ENCODE measurements at regions of chr4 and their contacts with region 1.

Region 1: GRCh38 chr4:183504064-183504929 is 561 bp upstream of the ING2 start:
- DNase-seq: peak; percentile 99
- H3K4me3 Mint-ChIP-seq: peak overlapping the region; percentile 93
- H3K27ac Mint-ChIP-seq: peak overlapping the region; percentile 92
- H3K4me1 Mint-ChIP-seq: peaks cover 28% of the 10 kb centered on the region
- H3K27me3 Mint-ChIP-seq: no peaks in the 10 kb centered on the region

Region 2: GRCh38 chr4:182917182-182918043 is 586.9 kb before region 1 on chr4 and contains the start of gene DCTD:
- CTCF ChIA-PET with region 1: no interaction called
- POLR2A ChIA-PET with region 1: no interaction called
- intact Hi-C with region 1: loop called (anchors 1 kb)
- DNase-seq: peak; percentile 85
- H3K4me3 Mint-ChIP-seq: peak within 1 kb of the TSS; percentile 83
- H3K27ac Mint-ChIP-seq: peak within 1 kb of the TSS; percentile 93
- H3K4me1 Mint-ChIP-seq: peaks cover 51% of the 10 kb centered on the region
- H3K27me3 Mint-ChIP-seq: no peaks in the 10 kb centered on the region
- total RNA-seq, gene DCTD: 115 to 117 TPM

Region 3: GRCh38 chr4:183374950-183375555 is 129.2 kb before region 1 on chr4:
- CTCF ChIA-PET with region 1: no interaction called
- POLR2A ChIA-PET with region 1: no interaction called
- intact Hi-C with region 1: no loop called
- DNase-seq: no peak
- H3K4me3 Mint-ChIP-seq: no peak overlapping the region
- H3K27ac Mint-ChIP-seq: no peak overlapping the region
- H3K4me1 Mint-ChIP-seq: no peaks in the 10 kb centered on the region
- H3K27me3 Mint-ChIP-seq: peaks cover 1% of the 10 kb centered on the region

Region 4: GRCh38 chr4:183471946-183472708 is 32.2 kb before region 1 on chr4:
- CTCF ChIA-PET with region 1: interaction called, 5 read pairs
- POLR2A ChIA-PET with region 1: no interaction called
- intact Hi-C with region 1: loop called (anchors 2 kb)
- DNase-seq: peak; percentile 84
- H3K4me3 Mint-ChIP-seq: no peak overlapping the region
- H3K27ac Mint-ChIP-seq: no peak overlapping the region
- H3K4me1 Mint-ChIP-seq: peaks cover 2% of the 10 kb centered on the region
- H3K27me3 Mint-ChIP-seq: no peaks in the 10 kb centered on the region

Region 5: GRCh38 chr4:183659029-183659871 is 155.0 kb after region 1 on chr4 and contains the starts of genes RWDD4 and TRAPPC11:
- CTCF ChIA-PET with region 1: no interaction called
- POLR2A ChIA-PET with region 1: interaction called, 3 read pairs
- intact Hi-C with region 1: loop called (anchors 1 kb)
- DNase-seq: peak; percentile 98
- H3K4me3 Mint-ChIP-seq: peak within 1 kb of the TSS; percentile 85
- H3K27ac Mint-ChIP-seq: peak within 1 kb of the TSS; percentile 80
- H3K4me1 Mint-ChIP-seq: peaks cover 35% of the 10 kb centered on the region
- H3K27me3 Mint-ChIP-seq: no peaks in the 10 kb centered on the region
- total RNA-seq, gene RWDD4: 19.4 to 19.8 TPM
- total RNA-seq, gene TRAPPC11: 29.7 to 30.2 TPM

Region 6: DNA sequence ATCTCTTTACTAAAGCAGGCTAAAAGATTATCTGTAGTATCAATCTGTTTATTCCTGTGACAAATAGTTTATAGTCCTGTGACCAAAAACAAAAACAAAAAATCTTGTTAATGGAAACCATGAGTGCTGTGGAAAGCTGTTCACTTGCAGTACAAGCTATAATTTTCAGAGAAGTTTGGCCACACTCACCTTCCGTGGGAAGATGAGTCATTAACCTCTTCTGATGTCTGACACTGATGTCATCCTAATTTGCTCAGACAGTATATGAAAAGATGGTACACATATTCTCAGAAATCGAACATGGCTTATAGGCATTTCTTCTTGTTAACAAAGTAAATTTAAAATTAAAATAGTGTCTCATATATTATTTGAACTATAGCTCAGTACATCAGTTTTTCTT is 733.3 kb after region 1 on chr4:
- CTCF ChIA-PET with region 1: no interaction called
- POLR2A ChIA-PET with region 1: no interaction called
- intact Hi-C with region 1: loop called (anchors 1 kb)
- DNase-seq: peak; percentile 72
- H3K4me3 Mint-ChIP-seq: peak overlapping the region; percentile 33
- H3K27ac Mint-ChIP-seq: peak overlapping the region; percentile 86
- H3K4me1 Mint-ChIP-seq: peaks cover 34% of the 10 kb centered on the region
- H3K27me3 Mint-ChIP-seq: no peaks in the 10 kb centered on the region

Region 7: GRCh38 chr4:184825896-184826690 is 1321.8 kb after region 1 on chr4 and contains the start of gene ACSL1:
- CTCF ChIA-PET with region 1: no interaction called
- POLR2A ChIA-PET with region 1: no interaction called
- intact Hi-C with region 1: loop called (anchors 10 kb)
- DNase-seq: peak; percentile 84
- H3K4me3 Mint-ChIP-seq: peak within 1 kb of the TSS; percentile 87
- H3K27ac Mint-ChIP-seq: peak within 1 kb of the TSS; percentile 75
- H3K4me1 Mint-ChIP-seq: peaks cover 37% of the 10 kb centered on the region
- H3K27me3 Mint-ChIP-seq: no peaks in the 10 kb centered on the region
- total RNA-seq, gene ACSL1: 22.0 to 22.2 TPM